ENCODE measurements at regions of chr11 and their contacts with region 1.

Region 1: DNA sequence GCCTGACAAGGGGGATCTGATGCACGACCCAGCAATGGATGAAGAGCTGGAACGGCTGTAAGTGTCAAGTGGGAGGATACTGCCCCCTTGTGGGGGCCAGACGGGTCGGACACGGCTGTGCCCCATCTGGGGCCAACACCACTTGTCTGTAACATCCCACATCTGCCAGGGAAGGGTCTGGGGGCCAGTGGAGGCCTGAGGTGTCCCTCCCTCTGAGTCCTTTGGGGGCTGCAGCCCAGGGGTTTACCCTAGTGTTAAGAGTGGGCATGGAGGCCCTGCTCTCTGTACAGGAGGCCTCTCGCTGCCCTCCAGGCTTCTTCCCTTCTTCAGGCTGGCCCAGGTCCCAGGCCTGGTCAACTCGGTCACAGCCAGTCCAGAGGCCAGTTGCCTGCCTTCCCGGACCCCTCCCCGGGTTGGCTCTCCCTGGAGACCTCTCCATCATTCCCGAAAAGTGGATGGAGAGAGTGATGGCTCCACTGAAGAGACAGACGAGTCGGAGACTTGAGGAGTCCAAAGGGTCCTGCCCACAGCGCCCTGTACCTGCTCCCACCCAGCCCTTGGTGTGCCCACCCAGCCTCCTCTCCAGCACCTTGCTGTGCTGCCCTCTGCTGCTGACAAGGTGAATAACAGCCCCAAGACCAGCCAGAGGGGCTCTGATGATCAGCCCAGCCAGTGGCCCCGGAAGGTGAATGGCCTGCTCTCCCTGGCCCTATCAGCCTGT is 15.4 kb downstream of the ARFGAP2 start:
- DNase-seq: peak in 1 of 2 donors; percentile 46
- H3K4me3 ChIP-seq: no peak overlapping the region
- H3K27ac ChIP-seq: peak overlapping the region in 1 of 2 donors; percentile 43
- H3K4me1 ChIP-seq: no peaks in the 10 kb centered on the region
- H3K27me3 ChIP-seq: no peaks in the 10 kb centered on the region
- CTCF ChIP-seq: peak; percentile 44 to 60 (median 56)
- POLR2A ChIP-seq: no peak

Region 2: DNA sequence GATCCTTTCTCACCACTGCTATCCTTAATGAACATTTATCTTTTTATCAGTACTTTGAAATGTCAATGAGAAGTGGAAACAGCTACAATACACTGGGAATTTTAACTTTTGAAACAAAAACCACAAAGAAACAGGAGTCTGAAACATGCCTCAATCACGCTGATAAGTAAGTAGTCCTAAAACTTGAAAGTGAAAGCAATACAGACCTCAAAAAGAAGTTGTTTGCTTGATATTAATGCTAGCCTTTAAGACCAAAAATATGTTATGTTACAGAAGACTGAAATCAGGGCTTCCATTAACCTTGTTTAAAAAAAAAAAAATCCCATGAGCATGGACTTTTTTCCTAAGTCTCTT is 1061.4 kb before region 1 on chr11:
- intact Hi-C with region 1: loop called (anchors 10 kb)
- DNase-seq: no peak
- H3K4me3 ChIP-seq: no peak overlapping the region
- H3K27ac ChIP-seq: peak overlapping the region in 1 of 2 donors; percentile 38
- H3K4me1 ChIP-seq: peaks cover 0 to 14% of the 10 kb centered on the region in 2 donors
- H3K27me3 ChIP-seq: no peaks in the 10 kb centered on the region
- CTCF ChIP-seq: no peak
- POLR2A ChIP-seq: no peak

Region 3: GRCh38 chr11:47010179-47010578 is 151.1 kb before region 1 on chr11:
- intact Hi-C with region 1: no loop called
- DNase-seq: no peak
- H3K4me3 ChIP-seq: no peak overlapping the region
- H3K27ac ChIP-seq: no peak overlapping the region
- H3K4me1 ChIP-seq: peaks cover 0 to 6% of the 10 kb centered on the region in 2 donors
- H3K27me3 ChIP-seq: no peaks in the 10 kb centered on the region
- CTCF ChIP-seq: no peak
- POLR2A ChIP-seq: no peak

Region 4: GRCh38 chr11:47071791-47072261 is 89.5 kb before region 1 on chr11:
- intact Hi-C with region 1: no loop called
- DNase-seq: no peak
- H3K4me3 ChIP-seq: no peak overlapping the region
- H3K27ac ChIP-seq: no peak overlapping the region
- H3K4me1 ChIP-seq: no peaks in the 10 kb centered on the region
- H3K27me3 ChIP-seq: no peaks in the 10 kb centered on the region
- CTCF ChIP-seq: no peak
- POLR2A ChIP-seq: no peak

Measured in breast epithelium (tissue), 4 donors.